ENCODE measurements at regions of chr7 and their contacts with region 1.

Region 1: DNA sequence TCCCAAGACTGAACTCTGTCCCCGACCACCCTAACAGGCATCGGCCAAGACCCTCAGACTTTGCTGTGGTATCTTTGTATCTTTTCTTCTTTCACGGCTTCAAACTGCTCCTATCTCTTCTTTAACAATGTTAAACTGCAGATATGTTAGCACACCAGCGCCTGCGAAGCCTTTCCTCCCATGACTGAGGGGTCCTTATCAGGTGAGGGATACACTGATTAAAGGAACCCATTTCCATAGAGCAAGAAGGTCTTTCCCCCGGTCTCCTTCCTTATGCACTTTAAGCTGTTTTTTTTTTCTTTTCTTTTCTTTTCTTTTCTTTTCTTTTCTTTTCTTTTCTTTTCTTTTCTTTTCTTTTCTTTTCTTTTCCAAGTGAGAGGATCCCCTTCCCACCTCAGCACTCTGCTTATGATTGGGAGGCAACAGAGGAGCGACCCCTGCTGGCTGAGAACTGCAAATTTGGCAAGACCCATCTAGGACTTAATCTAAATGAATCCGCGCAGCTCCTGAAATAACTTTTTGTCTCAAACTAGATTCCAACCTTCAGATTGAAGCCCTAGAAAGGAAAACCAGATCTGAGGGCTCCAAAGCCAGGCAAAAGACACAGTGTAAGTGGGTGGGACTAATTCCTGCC is 109.9 kb downstream of the ITGB8 start:
- DNase-seq: peak; percentile 47 to 71 (median 66)
- ATAC-seq: peak; percentile 92
- H3K4me3 ChIP-seq: no peak overlapping the region
- H3K27ac ChIP-seq: no peak overlapping the region
- H3K4me1 ChIP-seq: no peaks in the 10 kb centered on the region
- H3K27me3 ChIP-seq: 0 out of 5 replicates have a peak, but pooled peaks cover 0 to 4% of the 10 kb centered on the region in 2 experiments
- CTCF ChIP-seq: peak; percentile 64 to 76 (median 71)
- EP300 ChIP-seq: no peak
- POLR2A ChIP-seq: no peak
- RAD21 ChIP-seq: peak; percentile 51 to 58

Region 2: GRCh38 chr7:19708397-19709248 is 732.0 kb before region 1 on chr7 and contains the start of gene POLR1F:
- CTCF ChIA-PET with region 1: no interaction called
- POLR2A ChIA-PET with region 1: no interaction called
- in situ Hi-C with region 1: no loop called
- intact Hi-C with region 1: loop called (anchors 5 kb)
- DNase-seq: peak; percentile 85 to 96 (median 88)
- ATAC-seq: peak; percentile 96
- H3K4me3 ChIP-seq: peak within 1 kb of the TSS; percentile 64
- H3K27ac ChIP-seq: peak within 1 kb of the TSS; percentile 60
- H3K4me1 ChIP-seq: peaks cover 0 to 18% of the 10 kb centered on the region in 2 experiments; a peak in 2 of 5 replicates
- H3K27me3 ChIP-seq: no peaks in the 10 kb centered on the region; a peak in 1 of 5 replicates
- CTCF ChIP-seq: peak; percentile 84 to 96 (median 94)
- EP300 ChIP-seq: no peak; the same call in 1 of the 2 replicates
- POLR2A ChIP-seq: peak; percentile 95
- RAD21 ChIP-seq: peak; percentile 53 to 54
- polyA plus RNA-seq, gene POLR1F: 93.5 to 95.3 TPM

Region 3: GRCh38 chr7:19747740-19748339 is 692.7 kb before region 1 on chr7:
- CTCF ChIA-PET with region 1: interaction called, 3 read pairs
- POLR2A ChIA-PET with region 1: no interaction called
- in situ Hi-C with region 1: loop called (anchors 10 kb)
- intact Hi-C with region 1: loop called (anchors 2 kb)
- DNase-seq: peak; percentile 16 to 45 (median 23)
- ATAC-seq: peak; percentile 75
- H3K4me3 ChIP-seq: no peak overlapping the region
- H3K27ac ChIP-seq: no peak overlapping the region
- H3K4me1 ChIP-seq: no peaks in the 10 kb centered on the region
- H3K27me3 ChIP-seq: no peaks in the 10 kb centered on the region
- CTCF ChIP-seq: peak; percentile 32 to 62 (median 44); a peak in 5 of 6 replicates
- EP300 ChIP-seq: no peak
- POLR2A ChIP-seq: no peak
- RAD21 ChIP-seq: peak; percentile 66

Region 4: GRCh38 chr7:19982841-19983835 is 457.5 kb before region 1 on chr7:
- CTCF ChIA-PET with region 1: no interaction called
- POLR2A ChIA-PET with region 1: no interaction called
- in situ Hi-C with region 1: no loop called
- intact Hi-C with region 1: loop called (anchors 10 kb)
- DNase-seq: peak in 1 of 4 experiments; percentile 36
- ATAC-seq: no peak; the same call in 2 of the 3 replicates
- H3K4me3 ChIP-seq: no peak overlapping the region
- H3K27ac ChIP-seq: no peak overlapping the region
- H3K4me1 ChIP-seq: no peaks in the 10 kb centered on the region
- H3K27me3 ChIP-seq: no peaks in the 10 kb centered on the region
- CTCF ChIP-seq: peak in 2 of 3 experiments; percentile 22 to 29; a peak in 2 of 6 replicates
- EP300 ChIP-seq: no peak
- POLR2A ChIP-seq: no peak
- RAD21 ChIP-seq: peak; percentile 45 to 70

Region 5: GRCh38 chr7:20158684-20159083 is 281.9 kb before region 1 on chr7:
- CTCF ChIA-PET with region 1: interaction called, 6 read pairs
- POLR2A ChIA-PET with region 1: no interaction called
- in situ Hi-C with region 1: no loop called
- intact Hi-C with region 1: loop called (anchors 5 kb)
- DNase-seq: peak in 1 of 4 experiments; percentile 25
- ATAC-seq: peak; percentile 86
- H3K4me3 ChIP-seq: no peak overlapping the region
- H3K27ac ChIP-seq: no peak overlapping the region
- H3K4me1 ChIP-seq: no peaks in the 10 kb centered on the region
- H3K27me3 ChIP-seq: no peaks in the 10 kb centered on the region
- CTCF ChIP-seq: peak in 2 of 3 experiments; percentile 24 to 54; a peak in 2 of 6 replicates
- EP300 ChIP-seq: no peak
- POLR2A ChIP-seq: no peak
- RAD21 ChIP-seq: peak; percentile 65 to 73

Region 6: DNA sequence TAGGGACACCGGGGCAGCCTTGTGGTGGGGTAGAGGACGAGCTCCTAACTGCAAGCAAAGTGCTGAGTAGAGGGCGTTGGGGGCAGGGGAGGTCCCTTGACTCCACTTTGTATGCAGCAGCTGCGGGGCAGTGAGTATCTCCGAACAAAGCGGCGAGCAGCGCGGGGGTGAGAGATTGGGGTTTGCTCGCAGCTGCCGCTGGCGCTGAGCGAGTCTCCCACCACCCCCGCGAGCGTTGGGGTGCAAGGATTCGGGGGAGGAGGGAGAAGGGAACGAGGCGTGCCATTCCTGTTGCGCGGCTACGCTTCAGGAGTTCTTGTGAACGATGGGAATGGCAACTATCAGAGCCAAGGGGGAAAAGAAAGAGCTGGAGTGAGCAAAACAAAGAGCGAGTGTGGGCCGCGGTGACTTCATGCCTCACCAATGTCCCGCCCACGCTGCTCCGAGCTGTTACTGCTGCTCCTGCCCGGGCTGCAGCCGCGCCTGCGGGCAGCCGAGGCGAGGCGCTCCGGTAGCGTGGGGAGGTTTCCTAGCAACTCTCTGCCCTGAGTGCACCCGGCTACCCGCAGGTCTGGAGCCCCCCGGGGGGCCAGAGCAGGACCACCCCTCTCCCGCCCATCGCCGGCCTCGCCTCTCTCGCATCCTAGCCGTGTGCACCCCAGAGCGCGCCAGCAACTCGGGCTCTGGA is 110.2 kb before region 1 on chr7 and contains the start of gene ITGB8:
- CTCF ChIA-PET with region 1: no interaction called
- POLR2A ChIA-PET with region 1: no interaction called
- in situ Hi-C with region 1: no loop called
- intact Hi-C with region 1: loop called (anchors 5 kb)
- DNase-seq: peak; percentile 44 to 73 (median 58)
- ATAC-seq: peak; percentile 90
- H3K4me3 ChIP-seq: peak within 1 kb of the TSS; percentile 54
- H3K27ac ChIP-seq: peak within 1 kb of the TSS; percentile 57; the same call in 2 of the 3 replicates
- H3K4me1 ChIP-seq: peaks cover 4 to 18% of the 10 kb centered on the region in 2 experiments; a peak in 3 of 5 replicates
- H3K27me3 ChIP-seq: peaks cover 0 to 8% of the 10 kb centered on the region in 2 experiments; a peak in 1 of 5 replicates
- CTCF ChIP-seq: no peak
- EP300 ChIP-seq: no peak
- POLR2A ChIP-seq: no peak
- RAD21 ChIP-seq: no peak
- polyA plus RNA-seq, gene ITGB8: not detected

Region 7: DNA sequence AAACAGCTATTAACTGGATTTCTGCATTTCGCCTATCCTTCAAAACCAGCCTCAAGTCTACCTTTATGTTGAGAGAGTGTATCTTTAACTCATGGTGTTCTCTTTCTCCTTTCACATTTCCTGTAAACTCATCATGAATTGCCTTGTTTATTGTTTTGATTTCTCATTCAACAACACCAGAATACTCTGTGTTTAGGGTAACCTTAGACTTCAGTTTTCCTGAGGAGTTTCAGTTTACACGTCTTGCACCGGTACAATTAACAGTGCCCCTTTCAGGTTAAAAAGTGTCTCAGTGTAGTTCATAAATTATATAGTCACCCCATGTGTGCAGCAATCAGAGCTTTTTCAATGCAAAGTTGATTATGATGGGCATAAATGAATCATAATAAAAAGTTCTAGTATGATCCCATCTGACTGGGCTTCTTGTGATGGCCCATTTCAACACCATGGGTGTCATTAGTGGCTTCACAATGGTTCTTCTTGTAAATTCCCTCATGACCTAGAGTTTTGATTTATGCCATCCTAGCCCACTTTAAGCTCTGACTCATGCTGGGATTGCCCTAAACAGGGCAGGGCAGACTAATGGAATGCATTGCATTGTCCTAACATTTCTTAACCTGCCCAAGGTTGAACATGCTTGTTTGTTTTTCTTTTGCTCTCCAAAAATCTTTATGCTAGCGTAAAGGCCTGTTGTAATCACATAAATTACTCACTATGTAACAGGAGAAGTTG is 87.8 kb before region 1 on chr7:
- CTCF ChIA-PET with region 1: no interaction called
- POLR2A ChIA-PET with region 1: no interaction called
- in situ Hi-C with region 1: no loop called
- intact Hi-C with region 1: loop called (anchors 5 kb)
- DNase-seq: no peak
- ATAC-seq: no peak
- H3K4me3 ChIP-seq: no peak overlapping the region
- H3K27ac ChIP-seq: no peak overlapping the region
- H3K4me1 ChIP-seq: no peaks in the 10 kb centered on the region
- H3K27me3 ChIP-seq: peaks cover 4 to 6% of the 10 kb centered on the region in 2 experiments; a peak in 1 of 5 replicates
- CTCF ChIP-seq: no peak
- EP300 ChIP-seq: no peak
- POLR2A ChIP-seq: no peak
- RAD21 ChIP-seq: no peak

Region 8: DNA sequence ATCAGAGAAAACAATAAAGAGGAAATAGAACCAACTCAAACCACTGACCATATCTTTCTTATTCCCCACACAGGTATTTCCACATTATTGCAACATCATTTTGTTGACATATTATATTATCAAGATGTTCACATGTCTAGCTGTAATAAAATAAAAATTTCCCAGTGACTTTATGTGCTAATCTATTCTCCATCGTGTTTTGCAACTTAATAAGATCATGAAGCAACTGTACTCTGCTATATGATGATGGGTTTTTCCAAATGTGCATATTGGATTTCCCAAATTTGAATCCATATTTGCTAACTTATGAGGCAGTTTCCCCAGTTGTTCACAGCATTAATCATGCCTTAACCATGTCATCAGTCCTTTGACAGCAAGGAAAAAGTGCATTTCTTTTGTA is 17.9 kb after region 1 on chr7:
- CTCF ChIA-PET with region 1: no interaction called
- POLR2A ChIA-PET with region 1: no interaction called
- in situ Hi-C with region 1: no loop called
- intact Hi-C with region 1: no loop called
- DNase-seq: no peak
- ATAC-seq: no peak
- H3K4me3 ChIP-seq: no peak overlapping the region
- H3K27ac ChIP-seq: no peak overlapping the region
- H3K4me1 ChIP-seq: no peaks in the 10 kb centered on the region
- H3K27me3 ChIP-seq: no peaks in the 10 kb centered on the region
- CTCF ChIP-seq: no peak
- EP300 ChIP-seq: no peak
- POLR2A ChIP-seq: no peak
- RAD21 ChIP-seq: no peak

Measured in K562 (cell line).